Esophagus muscularis mucosa (tissue), 4 donors: ENCODE measurements at regions of chr12 and their contacts with region 1.

Region 1: GRCh38 chr12:94973221-94973620 is 30.3 kb downstream of the NDUFA12 start:
- DNase-seq: no peak
- H3K4me3 ChIP-seq: no peak overlapping the region
- H3K27ac ChIP-seq: no peak overlapping the region
- H3K4me1 ChIP-seq: peaks cover 0 to 5% (median 0%) of the 10 kb centered on the region in 4 donors
- H3K27me3 ChIP-seq: no peaks in the 10 kb centered on the region
- CTCF ChIP-seq: no peak
- EP300 ChIP-seq: no peak
- POLR2A ChIP-seq: no peak

Region 2: GRCh38 chr12:94001691-94002090 is 971.5 kb before region 1 on chr12:
- intact Hi-C with region 1: no loop called
- DNase-seq: no peak
- H3K4me3 ChIP-seq: no peak overlapping the region
- H3K27ac ChIP-seq: no peak overlapping the region
- H3K4me1 ChIP-seq: no peaks in the 10 kb centered on the region
- H3K27me3 ChIP-seq: no peaks in the 10 kb centered on the region
- CTCF ChIP-seq: no peak
- EP300 ChIP-seq: no peak
- POLR2A ChIP-seq: no peak

Region 3: DNA sequence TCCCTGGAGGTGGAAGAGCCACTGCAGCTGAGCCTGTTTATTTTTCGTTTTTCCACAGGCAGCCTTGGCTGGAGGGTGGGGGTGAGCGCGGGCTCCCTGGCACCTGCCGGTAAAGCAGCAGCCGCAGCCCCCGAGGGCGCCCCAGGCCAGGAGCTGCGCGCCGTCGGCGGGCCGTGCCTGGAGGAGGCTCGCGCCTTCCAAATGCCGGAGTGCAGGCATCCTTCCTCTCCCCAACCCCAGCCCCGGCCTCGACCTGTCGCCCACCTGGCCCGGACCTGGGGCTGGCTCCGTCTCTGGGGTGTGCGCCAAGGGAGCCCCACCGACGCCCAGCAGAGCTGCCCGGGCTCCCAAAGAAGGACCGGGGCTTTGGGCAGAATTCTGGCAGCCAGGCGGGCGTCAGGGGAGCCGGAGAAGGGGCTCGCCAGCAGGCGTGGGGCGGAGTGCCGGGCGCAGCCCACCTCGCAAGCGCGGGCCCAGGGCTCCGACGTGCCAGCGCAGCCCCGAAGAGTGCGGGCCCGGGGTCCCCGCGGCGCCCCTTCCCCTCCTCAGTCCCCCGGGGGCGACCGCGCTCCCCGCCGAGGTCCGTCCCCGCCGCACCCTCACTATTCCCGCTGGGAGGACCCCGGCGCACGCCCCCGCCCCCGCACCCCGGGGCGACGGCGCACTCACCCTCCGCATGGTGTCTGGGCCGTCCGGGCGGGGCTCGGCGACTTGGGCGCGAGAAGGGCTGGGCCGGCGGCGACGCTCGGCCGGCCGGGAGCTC is 100.1 kb before region 1 on chr12:
- intact Hi-C with region 1: no loop called
- DNase-seq: peak; percentile 74
- H3K4me3 ChIP-seq: peak overlapping the region; percentile 79 to 92 (median 86)
- H3K27ac ChIP-seq: peak overlapping the region; percentile 80 to 84 (median 82)
- H3K4me1 ChIP-seq: peaks cover 19 to 50% (median 44%) of the 10 kb centered on the region in 4 donors
- H3K27me3 ChIP-seq: peaks cover 0 to 15% (median 0%) of the 10 kb centered on the region in 4 donors
- CTCF ChIP-seq: no peak
- EP300 ChIP-seq: no peak
- POLR2A ChIP-seq: no peak

Region 4: DNA sequence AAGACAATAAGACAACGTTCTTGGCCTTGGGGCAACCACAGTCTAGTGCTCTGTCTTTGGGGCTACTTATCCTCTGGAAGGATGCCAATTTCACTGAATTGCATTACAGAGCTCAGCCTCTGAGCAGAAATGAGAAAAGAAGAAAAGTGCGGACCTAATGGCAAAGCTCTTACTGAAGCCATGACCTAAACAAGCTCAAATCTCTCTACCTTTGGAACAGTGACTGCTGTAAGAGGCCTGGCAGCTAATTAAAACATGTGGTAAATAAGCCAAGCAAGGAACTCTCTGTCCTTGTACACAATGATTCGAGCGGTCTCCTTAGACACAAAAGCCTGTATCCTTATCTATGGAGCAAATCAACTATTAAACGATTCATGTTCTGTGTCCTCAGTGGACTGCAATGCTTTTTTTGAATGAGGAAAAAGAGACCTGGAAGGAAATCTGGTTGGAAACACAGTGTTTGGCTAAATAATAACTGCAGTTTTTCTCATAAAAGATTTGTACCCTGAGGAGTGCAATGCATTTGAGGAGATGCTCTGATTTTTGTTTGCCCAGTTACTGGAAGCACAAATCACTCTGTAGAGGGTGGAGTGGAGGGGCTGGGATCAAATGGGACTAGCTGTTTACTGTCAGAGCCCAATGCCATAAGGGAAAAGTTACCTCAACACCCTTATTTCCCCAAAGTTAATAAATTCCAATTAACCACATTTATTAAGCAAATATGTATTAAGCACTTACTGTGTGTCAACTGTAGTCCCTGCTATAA is 83.6 kb before region 1 on chr12:
- intact Hi-C with region 1: loop called (anchors 10 kb)
- DNase-seq: no peak
- H3K4me3 ChIP-seq: no peak overlapping the region
- H3K27ac ChIP-seq: no peak overlapping the region
- H3K4me1 ChIP-seq: no peaks in the 10 kb centered on the region
- H3K27me3 ChIP-seq: no peaks in the 10 kb centered on the region
- CTCF ChIP-seq: no peak
- EP300 ChIP-seq: no peak
- POLR2A ChIP-seq: no peak

Region 5: GRCh38 chr12:95582230-95583058 is 609.2 kb after region 1 on chr12:
- intact Hi-C with region 1: no loop called
- DNase-seq: no peak
- H3K4me3 ChIP-seq: no peak overlapping the region
- H3K27ac ChIP-seq: no peak overlapping the region
- H3K4me1 ChIP-seq: peaks cover 0 to 17% (median 4%) of the 10 kb centered on the region in 4 donors
- H3K27me3 ChIP-seq: no peaks in the 10 kb centered on the region
- CTCF ChIP-seq: peak; percentile 51 to 61 (median 53)
- EP300 ChIP-seq: no peak
- POLR2A ChIP-seq: no peak